ENCODE measurements at regions of chr2 and their contacts with region 1.

Region 1: GRCh38 chr2:223837287-223838061 is at the start of gene AP1S3:
- DNase-seq: peak; percentile 88
- H3K4me3 ChIP-seq: peak within 1 kb of the TSS; percentile 83
- H3K27ac ChIP-seq: peak within 1 kb of the TSS; percentile 73
- H3K4me1 ChIP-seq: peaks cover 51% of the 10 kb centered on the region
- CTCF ChIP-seq: peak; percentile 50
- total RNA-seq, gene AP1S3: 7.0 and 11.2 TPM in 2 replicates

Region 2: DNA sequence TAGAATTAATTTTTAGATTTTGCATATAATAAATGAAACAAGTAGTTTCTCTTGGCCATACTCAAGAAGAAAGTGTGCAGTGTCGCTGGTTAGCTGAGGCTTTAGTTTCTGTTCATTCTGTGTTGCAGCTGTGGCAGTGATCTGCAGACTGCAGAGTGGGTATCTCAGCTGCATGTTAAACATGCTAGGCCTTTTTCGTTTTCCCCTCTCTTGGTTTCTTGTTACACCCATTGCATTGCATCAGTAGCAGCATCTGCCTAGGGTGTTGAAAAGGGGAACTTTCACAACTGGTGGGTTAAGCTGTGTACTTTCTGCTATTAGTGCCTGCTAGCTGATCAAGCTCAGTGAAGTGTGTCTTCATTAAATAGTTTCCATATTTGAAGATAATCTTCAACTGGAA is 925.4 kb before region 1 on chr2:
- CTCF ChIA-PET with region 1: no interaction called
- POLR2A ChIA-PET with region 1: no interaction called
- intact Hi-C with region 1: loop called (anchors 10 kb)
- DNase-seq: peak; percentile 97
- H3K4me3 ChIP-seq: peak overlapping the region; percentile 59
- H3K27ac ChIP-seq: peak overlapping the region; percentile 98
- H3K4me1 ChIP-seq: peaks cover 69% of the 10 kb centered on the region
- CTCF ChIP-seq: no peak

Region 3: DNA sequence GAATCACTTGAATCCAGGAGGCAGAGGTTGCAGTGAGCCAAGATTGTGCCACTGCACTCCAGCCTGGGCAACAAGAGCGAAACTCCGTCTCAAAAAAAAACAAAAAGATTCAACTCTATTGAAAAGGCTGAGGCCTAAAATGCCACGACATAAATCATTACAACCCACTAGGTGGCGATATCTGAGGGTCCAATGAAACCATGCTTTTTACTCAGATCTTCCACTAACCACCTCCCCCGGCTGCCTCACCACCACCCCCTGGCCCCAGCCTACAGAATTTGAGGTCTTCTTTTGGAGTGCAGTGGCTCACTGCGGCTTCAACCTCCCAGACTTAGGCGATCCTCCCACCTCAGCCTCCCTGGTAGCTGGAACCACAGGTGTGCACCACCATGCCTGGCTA is 57.6 kb before region 1 on chr2:
- CTCF ChIA-PET with region 1: no interaction called
- POLR2A ChIA-PET with region 1: interaction called, 3 read pairs
- intact Hi-C with region 1: loop called (anchors 1 kb)
- DNase-seq: peak; percentile 81
- H3K4me3 ChIP-seq: no peak overlapping the region
- H3K27ac ChIP-seq: no peak overlapping the region
- H3K4me1 ChIP-seq: no peaks in the 10 kb centered on the region
- CTCF ChIP-seq: peak; percentile 70

Region 4: DNA sequence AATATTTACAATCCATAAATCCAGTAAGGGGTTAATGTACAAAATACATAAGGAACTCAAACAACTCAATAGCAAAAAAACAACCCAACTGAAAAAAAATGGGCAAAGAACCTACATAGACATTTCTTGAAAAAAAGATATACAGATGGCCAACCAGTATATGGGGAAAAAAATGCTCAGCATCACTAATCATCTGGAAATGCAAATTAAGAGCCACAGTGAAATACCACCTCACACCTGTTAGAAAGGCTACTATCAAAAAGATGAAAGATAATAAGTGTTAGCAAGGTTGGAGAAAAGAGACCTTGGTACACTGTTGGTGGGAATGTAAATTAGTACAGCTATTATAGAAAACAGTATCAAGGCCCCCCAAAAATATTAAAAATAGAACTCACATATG is 14.7 kb before region 1 on chr2:
- CTCF ChIA-PET with region 1: interaction called, 4 read pairs
- POLR2A ChIA-PET with region 1: interaction called, 66 read pairs
- intact Hi-C with region 1: no loop called
- DNase-seq: peak; percentile 82
- H3K4me3 ChIP-seq: peak overlapping the region; percentile 39
- H3K27ac ChIP-seq: peak overlapping the region; percentile 86
- H3K4me1 ChIP-seq: peaks cover 98% of the 10 kb centered on the region
- CTCF ChIP-seq: no peak

Region 5: GRCh38 chr2:223944703-223945531 is 107.4 kb after region 1 on chr2 and contains the start of gene WDFY1:
- CTCF ChIA-PET with region 1: no interaction called
- POLR2A ChIA-PET with region 1: interaction called, 3 read pairs
- intact Hi-C with region 1: loop called (anchors 2 kb)
- DNase-seq: peak; percentile 89
- H3K4me3 ChIP-seq: peak within 1 kb of the TSS; percentile 84
- H3K27ac ChIP-seq: no peak within 1 kb of the TSS
- H3K4me1 ChIP-seq: peaks cover 28% of the 10 kb centered on the region
- CTCF ChIP-seq: no peak
- total RNA-seq, gene WDFY1: 45.3 and 46.6 TPM in 2 replicates

Measured in OCI-LY7 (cell line).